B cell (primary cell): ENCODE measurements at regions of chr10 and their contacts with region 1.

Region 1: GRCh38 chr10:79445141-79445976 is at the start of gene ZCCHC24:
- DNase-seq: peak; percentile 97
- ATAC-seq: peak; percentile 91
- H3K4me3 ChIP-seq: peak within 1 kb of the TSS; percentile 44 to 73 (median 65)
- H3K4me3 Mint-ChIP-seq: peak within 1 kb of the TSS; percentile 94
- H3K27ac ChIP-seq: no peak within 1 kb of the TSS
- H3K27ac Mint-ChIP-seq: peak within 1 kb of the TSS; percentile 86
- H3K4me1 ChIP-seq: peaks cover 18 to 29% of the 10 kb centered on the region in 2 donors
- H3K4me1 Mint-ChIP-seq: peaks cover 26% of the 10 kb centered on the region
- H3K27me3 ChIP-seq: peaks cover 0 to 12% (median 5%) of the 10 kb centered on the region in 4 experiments
- H3K27me3 Mint-ChIP-seq: no peaks in the 10 kb centered on the region
- CTCF ChIP-seq: no peak
- total RNA-seq, gene ZCCHC24: 2.1 and 2.3 TPM in 2 replicates

Region 2: DNA sequence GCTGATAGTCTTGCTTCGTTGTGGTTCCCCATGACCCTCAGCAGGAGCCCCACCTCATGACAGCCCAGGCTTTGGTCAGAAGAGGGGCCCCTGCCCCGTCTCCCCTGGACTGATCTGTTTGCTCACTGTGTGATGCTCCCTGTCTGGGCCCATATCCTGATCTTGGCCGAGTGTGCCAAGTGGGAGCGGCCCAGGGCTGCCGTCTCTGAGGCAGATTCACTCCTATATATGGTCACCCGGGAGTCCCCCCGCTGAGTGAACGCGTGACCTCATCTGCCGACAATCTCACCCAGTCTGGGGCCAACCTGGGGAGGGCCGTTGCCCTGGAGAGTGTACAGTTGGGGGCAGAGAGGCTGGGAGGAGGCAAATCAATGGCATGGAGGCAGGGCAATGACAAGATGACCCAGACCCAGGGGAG is 63.5 kb before region 1 on chr10:
- CTCF ChIA-PET with region 1: no interaction called
- POLR2A ChIA-PET with region 1: no interaction called
- intact Hi-C with region 1: loop called (anchors 10 kb)
- DNase-seq: no peak
- ATAC-seq: no peak
- H3K4me3 ChIP-seq: no peak overlapping the region
- H3K4me3 Mint-ChIP-seq: no peak overlapping the region
- H3K27ac ChIP-seq: no peak overlapping the region
- H3K27ac Mint-ChIP-seq: no peak overlapping the region
- H3K4me1 ChIP-seq: no peaks in the 10 kb centered on the region
- H3K4me1 Mint-ChIP-seq: no peaks in the 10 kb centered on the region
- H3K27me3 ChIP-seq: no peaks in the 10 kb centered on the region
- H3K27me3 Mint-ChIP-seq: no peaks in the 10 kb centered on the region
- CTCF ChIP-seq: no peak